ENCODE measurements at regions of chr14 and their contacts with region 1.

Region 1: GRCh38 chr14:45426670-45427282 is 173.8 kb upstream of the MIS18BP1 start:
- DNase-seq: no peak
- H3K4me3 ChIP-seq: no peak overlapping the region
- H3K27ac ChIP-seq: no peak overlapping the region
- H3K4me1 ChIP-seq: no peaks in the 10 kb centered on the region
- H3K27me3 ChIP-seq: no peaks in the 10 kb centered on the region
- CTCF ChIP-seq: peak; percentile 47 to 71 (median 63)
- EP300 ChIP-seq: no peak
- POLR2A ChIP-seq: no peak

Region 2: DNA sequence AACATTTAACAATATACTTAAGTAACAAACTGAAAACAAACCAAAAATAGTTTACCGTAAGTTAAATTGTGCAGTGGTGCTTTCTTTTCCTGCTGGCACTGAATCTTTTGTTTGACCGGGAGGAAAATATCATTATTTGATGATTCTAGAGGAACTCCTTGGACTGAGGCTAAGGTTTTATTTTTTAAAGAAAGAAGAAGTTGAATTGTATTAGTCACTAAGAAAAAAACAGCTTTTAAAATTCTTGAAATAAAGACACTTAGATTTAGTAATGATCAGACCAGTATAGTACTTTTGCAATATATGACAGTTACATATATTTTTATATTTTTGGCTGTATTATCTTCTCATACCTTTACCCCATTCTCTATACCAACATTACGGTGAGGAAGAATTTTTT is 184.1 kb before region 1 on chr14:
- in situ Hi-C with region 1: no loop called
- intact Hi-C with region 1: no loop called
- DNase-seq: no peak
- H3K4me3 ChIP-seq: no peak overlapping the region
- H3K27ac ChIP-seq: no peak overlapping the region
- H3K4me1 ChIP-seq: peaks cover 0 to 7% (median 0%) of the 10 kb centered on the region in 4 donors
- H3K27me3 ChIP-seq: no peaks in the 10 kb centered on the region
- CTCF ChIP-seq: no peak
- EP300 ChIP-seq: no peak
- POLR2A ChIP-seq: no peak

Region 3: GRCh38 chr14:46344327-46344937 is 917.7 kb after region 1 on chr14:
- in situ Hi-C with region 1: loop called in 1 of 4 experiments (anchors 25 kb)
- intact Hi-C with region 1: no loop called
- DNase-seq: no peak
- H3K4me3 ChIP-seq: no peak overlapping the region
- H3K27ac ChIP-seq: no peak overlapping the region
- H3K4me1 ChIP-seq: no peaks in the 10 kb centered on the region
- H3K27me3 ChIP-seq: no peaks in the 10 kb centered on the region
- CTCF ChIP-seq: peak; percentile 25 to 43 (median 33)
- EP300 ChIP-seq: no peak
- POLR2A ChIP-seq: no peak

Region 4: DNA sequence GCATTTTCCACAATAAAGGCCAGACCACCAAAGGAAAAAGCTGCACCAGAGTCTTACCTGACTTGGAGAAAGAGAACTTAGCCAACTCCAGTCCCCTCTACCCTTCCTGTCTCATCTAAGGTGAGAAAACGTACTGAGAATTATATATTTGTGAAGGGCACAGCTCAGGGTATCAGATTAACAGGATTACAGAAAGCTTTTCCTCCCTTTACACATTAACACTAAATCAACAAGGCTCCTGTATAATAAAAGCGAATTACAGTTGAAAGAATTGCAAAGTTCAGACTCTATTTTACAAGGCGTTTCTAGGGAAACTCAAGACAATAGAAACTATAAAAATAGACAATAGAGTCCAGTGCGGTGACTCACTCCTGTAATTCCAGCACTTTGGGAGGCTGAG is 1307.5 kb after region 1 on chr14:
- in situ Hi-C with region 1: no loop called
- intact Hi-C with region 1: loop called (anchors 5 kb)
- DNase-seq: no peak
- H3K4me3 ChIP-seq: peak overlapping the region in 3 of 4 donors; percentile 36 to 57 (median 46)
- H3K27ac ChIP-seq: peak overlapping the region; percentile 79 to 91 (median 84)
- H3K4me1 ChIP-seq: no peaks in the 10 kb centered on the region
- H3K27me3 ChIP-seq: no peaks in the 10 kb centered on the region
- CTCF ChIP-seq: no peak
- EP300 ChIP-seq: no peak
- POLR2A ChIP-seq: peak; percentile 64

Measured in transverse colon (tissue), 4 donors.